ENCODE measurements at regions of chr20 and their contacts with region 1.

Region 1: DNA sequence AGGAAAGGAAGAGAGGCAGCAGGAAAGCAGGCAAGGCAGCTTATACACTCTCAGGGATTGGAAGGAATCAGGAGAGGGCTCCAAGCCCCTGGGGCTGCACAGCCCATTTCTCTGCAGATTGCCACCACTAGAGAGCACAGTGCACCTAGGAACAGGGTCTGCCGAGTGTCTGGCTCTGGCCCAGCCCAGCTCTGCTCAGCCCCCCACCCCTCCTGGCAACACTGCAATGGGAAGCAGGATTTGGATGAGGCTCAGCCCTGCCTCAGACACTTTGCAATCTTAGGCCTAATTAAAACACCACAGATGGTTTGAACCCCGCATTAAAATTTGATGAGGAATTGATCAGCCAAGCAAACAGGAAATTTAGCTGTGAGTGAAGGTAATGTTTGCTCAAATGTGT is 252.7 kb downstream of the DHX35 start:
- DNase-seq: no peak
- H3K4me3 ChIP-seq: no peak overlapping the region
- H3K27ac ChIP-seq: no peak overlapping the region
- H3K4me1 ChIP-seq: no peaks in the 10 kb centered on the region
- H3K27me3 ChIP-seq: no peaks in the 10 kb centered on the region
- CTCF ChIP-seq: no peak

Region 2: GRCh38 chr20:39089029-39089428 is 125.8 kb before region 1 on chr20:
- CTCF ChIA-PET with region 1: no interaction called
- dilution Hi-C with region 1: no loop called
- in situ Hi-C with region 1: no loop called
- intact Hi-C with region 1: no loop called
- DNase-seq: no peak
- H3K4me3 ChIP-seq: no peak overlapping the region
- H3K27ac ChIP-seq: no peak overlapping the region
- H3K4me1 ChIP-seq: no peaks in the 10 kb centered on the region
- H3K27me3 ChIP-seq: no peaks in the 10 kb centered on the region
- CTCF ChIP-seq: no peak

Region 3: GRCh38 chr20:39181490-39181889 is 33.3 kb before region 1 on chr20:
- CTCF ChIA-PET with region 1: no interaction called
- dilution Hi-C with region 1: loop called (anchors 5 kb)
- in situ Hi-C with region 1: no loop called
- intact Hi-C with region 1: no loop called
- DNase-seq: no peak
- H3K4me3 ChIP-seq: no peak overlapping the region
- H3K27ac ChIP-seq: no peak overlapping the region
- H3K4me1 ChIP-seq: no peaks in the 10 kb centered on the region
- H3K27me3 ChIP-seq: no peaks in the 10 kb centered on the region
- CTCF ChIP-seq: no peak

Region 4: DNA sequence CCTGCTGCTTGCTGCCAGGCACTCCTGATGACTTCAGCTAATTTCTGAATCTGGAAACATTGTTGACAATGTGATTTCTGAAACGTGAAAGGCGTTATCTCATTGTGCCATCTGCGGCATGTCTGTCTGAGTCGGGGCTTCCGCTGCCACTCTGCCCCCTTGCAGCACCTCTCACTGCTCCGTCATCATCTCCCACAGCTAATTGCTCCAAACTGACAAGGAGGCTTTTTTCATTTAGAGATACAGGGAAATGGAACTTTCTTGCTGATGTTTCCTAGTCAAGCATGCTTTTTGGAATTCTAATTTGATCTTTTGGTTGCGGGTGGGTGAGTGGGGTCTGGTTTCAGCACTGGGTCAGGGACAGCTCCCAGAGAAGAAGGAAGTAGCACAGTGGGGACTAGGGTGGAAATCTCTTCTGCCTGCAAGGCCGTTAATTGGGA is 19.2 kb before region 1 on chr20:
- CTCF ChIA-PET with region 1: no interaction called
- dilution Hi-C with region 1: no loop called
- in situ Hi-C with region 1: no loop called
- intact Hi-C with region 1: no loop called
- DNase-seq: no peak
- H3K4me3 ChIP-seq: no peak overlapping the region
- H3K27ac ChIP-seq: no peak overlapping the region
- H3K4me1 ChIP-seq: peaks cover under 1% of the 10 kb centered on the region
- H3K27me3 ChIP-seq: no peaks in the 10 kb centered on the region
- CTCF ChIP-seq: no peak

Region 5: DNA sequence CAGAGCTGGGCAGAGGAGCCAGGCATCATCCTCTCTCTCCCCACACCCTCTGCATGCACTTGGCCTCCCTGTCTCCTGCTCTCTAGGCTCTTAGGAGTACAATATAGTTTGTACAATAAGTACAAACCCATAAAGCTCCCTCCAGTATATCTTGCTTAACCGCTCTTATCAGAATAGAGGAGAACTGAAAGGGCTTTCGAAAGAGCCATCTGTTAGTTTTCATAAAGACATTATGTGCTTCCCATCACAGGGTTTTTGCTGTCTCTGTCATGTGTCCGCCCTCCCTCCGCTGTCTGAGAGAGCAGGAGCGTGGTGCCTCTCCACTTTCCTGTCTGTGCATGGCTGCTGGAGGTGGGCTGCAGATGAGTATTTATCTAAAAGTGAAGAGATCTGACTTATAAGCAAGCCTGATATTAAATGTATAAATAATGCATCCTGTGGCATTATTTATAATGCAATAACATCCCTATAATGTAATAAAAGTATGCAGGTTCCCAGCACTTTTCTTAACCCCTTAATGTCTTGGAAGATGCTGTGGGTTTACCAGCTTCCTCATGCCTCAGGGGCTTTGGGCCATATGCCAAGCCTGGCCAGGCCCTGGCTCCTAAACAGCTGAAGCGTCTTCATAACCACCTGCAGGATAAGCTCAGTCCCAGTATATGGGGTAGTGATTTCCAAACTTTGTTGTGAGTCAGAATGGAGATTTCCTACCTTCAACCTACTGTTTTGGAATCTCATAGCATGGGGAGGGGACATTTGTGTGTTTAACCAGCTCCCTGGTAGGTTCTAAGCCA is 44.4 kb after region 1 on chr20:
- CTCF ChIA-PET with region 1: interaction called, 23 read pairs
- dilution Hi-C with region 1: no loop called
- in situ Hi-C with region 1: no loop called
- intact Hi-C with region 1: no loop called
- DNase-seq: no peak
- H3K4me3 ChIP-seq: no peak overlapping the region
- H3K27ac ChIP-seq: no peak overlapping the region
- H3K4me1 ChIP-seq: no peaks in the 10 kb centered on the region
- H3K27me3 ChIP-seq: no peaks in the 10 kb centered on the region
- CTCF ChIP-seq: no peak

Region 6: GRCh38 chr20:39381596-39381995 is 166.8 kb after region 1 on chr20:
- CTCF ChIA-PET with region 1: no interaction called
- dilution Hi-C with region 1: no loop called
- in situ Hi-C with region 1: no loop called
- intact Hi-C with region 1: no loop called
- DNase-seq: no peak
- H3K4me3 ChIP-seq: no peak overlapping the region
- H3K27ac ChIP-seq: no peak overlapping the region
- H3K4me1 ChIP-seq: no peaks in the 10 kb centered on the region
- H3K27me3 ChIP-seq: no peaks in the 10 kb centered on the region
- CTCF ChIP-seq: no peak

Region 7: DNA sequence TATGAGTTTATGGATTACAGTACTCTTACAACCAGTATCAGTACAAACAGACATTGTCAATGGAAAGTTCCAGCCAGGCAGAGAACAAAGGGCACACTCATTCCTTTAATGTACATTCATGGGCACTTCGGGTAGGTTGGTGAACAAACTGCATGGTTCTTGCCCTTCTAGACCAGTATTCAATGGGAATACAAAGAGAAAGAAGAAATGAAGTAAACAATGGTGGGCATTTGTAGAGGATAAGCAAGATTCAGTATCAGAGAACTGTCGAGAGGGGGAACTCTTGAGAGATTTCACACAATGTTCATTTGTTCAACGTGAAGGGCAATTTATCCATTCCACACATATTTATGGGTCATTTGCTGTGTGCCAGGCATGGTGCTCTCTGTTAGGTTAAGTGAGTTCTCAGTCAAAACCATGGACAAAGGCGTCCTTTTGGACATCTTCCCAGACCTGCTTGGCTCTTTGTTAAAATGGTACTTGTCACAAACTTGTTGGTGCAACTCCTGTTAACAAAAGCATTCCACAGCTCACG is 462.1 kb after region 1 on chr20:
- CTCF ChIA-PET with region 1: no interaction called
- dilution Hi-C with region 1: no loop called
- in situ Hi-C with region 1: no loop called
- intact Hi-C with region 1: no loop called
- DNase-seq: peak; percentile 12
- H3K4me3 ChIP-seq: no peak overlapping the region
- H3K27ac ChIP-seq: no peak overlapping the region
- H3K4me1 ChIP-seq: no peaks in the 10 kb centered on the region
- H3K27me3 ChIP-seq: no peaks in the 10 kb centered on the region
- CTCF ChIP-seq: peak; percentile 17 to 40